Activated CD4-positive, alpha-beta memory T cell treated with anti-CD3 and anti-CD28 coated beads, Interleukin-2, amount 10 ng/mL, durations not matched to agents 7 days and 5 days (primary cell): ENCODE measurements at regions of chr15 and their contacts with region 1.

Region 1: DNA sequence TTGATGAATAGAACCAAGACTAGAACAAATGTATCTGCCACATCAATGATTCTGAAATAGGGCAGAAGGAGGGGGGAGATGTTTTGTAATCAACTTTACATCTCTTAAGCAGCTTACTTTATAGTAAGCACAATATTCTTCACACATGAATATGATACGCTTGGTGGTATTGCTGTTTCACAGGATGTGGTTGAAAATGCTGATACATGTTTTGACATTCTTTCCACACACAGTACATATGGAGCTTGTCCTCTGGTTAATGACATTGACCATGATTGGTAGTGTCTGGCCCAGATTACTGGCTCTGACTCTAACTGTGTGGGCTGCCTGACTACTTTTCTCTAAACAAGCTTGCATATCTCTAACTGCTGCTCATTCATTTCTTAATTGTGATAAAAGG is 168.9 kb downstream of the KLHL25 start:
- DNase-seq: peak; percentile 51
- H3K4me3 Mint-ChIP-seq: peak overlapping the region; percentile 51
- H3K27ac Mint-ChIP-seq: peak overlapping the region; percentile 90
- H3K4me1 Mint-ChIP-seq: peaks cover 74% of the 10 kb centered on the region
- H3K27me3 Mint-ChIP-seq: no peaks in the 10 kb centered on the region

Region 2: DNA sequence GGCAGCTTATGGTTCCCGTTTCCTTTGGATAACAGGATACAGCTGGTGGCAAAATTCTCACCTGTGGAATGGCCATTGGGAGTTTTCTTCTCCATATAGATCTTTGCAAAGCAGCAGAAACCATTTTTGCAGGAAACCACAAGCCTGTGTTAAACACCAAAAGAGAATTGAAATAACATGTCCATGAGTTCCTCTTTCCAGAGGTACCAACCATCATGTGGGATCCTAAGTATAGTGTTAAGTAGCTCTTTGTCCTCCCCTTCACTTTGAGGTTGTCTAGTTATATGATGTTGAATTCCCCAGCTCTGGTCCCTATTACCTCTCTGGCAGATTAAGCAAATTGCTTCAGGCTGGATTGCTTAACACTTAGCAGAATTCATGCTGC is 150.5 kb before region 1 on chr15:
- CTCF ChIA-PET with region 1: no interaction called
- POLR2A ChIA-PET with region 1: no interaction called
- DNase-seq: no peak
- H3K4me3 Mint-ChIP-seq: no peak overlapping the region
- H3K27ac Mint-ChIP-seq: no peak overlapping the region
- H3K4me1 Mint-ChIP-seq: peaks cover 42% of the 10 kb centered on the region
- H3K27me3 Mint-ChIP-seq: no peaks in the 10 kb centered on the region

Region 3: DNA sequence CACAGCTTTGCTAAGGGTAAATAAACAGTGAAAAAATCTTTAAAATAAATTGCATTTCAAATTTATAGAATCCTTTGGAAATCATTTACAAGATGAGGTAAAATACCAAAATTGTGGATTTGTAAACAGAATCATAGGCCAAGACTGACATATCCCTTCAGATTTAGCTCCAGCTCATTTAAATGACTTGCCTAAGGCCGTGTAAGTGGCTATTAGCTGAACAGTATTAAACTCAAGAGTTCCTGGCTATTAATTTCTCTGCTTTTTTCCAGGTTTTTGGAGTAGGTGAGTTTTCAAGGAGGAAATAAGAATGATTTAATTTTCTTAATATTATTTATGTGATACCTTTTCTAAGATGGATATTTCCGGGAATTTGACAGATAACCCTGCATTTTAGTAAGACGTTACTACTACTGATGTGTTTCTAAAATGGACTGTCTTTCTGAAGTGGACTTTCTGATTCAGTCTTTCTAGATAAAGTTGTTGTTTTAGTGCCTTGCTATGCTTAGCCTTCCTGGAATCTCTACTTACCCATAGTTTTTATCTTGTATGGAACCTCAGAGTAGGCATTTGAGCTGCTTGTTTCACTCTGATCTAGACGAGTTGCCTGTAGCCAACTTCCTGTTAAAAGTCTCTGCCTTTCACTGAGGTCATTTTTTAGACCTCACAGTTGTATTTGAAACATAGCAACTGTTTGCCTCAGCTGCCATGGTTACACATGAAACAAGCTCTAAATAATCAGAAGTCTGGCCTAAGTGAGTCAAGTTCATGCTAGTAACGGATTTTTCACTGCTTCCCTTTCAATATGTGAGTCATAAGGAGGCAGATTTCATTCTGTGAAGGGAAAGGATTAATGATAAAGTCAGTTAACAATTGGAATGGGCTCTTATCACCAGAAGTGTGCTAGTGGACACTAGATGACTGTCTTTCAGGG is 41.9 kb after region 1 on chr15:
- CTCF ChIA-PET with region 1: interaction called, 4 read pairs
- POLR2A ChIA-PET with region 1: interaction called, 19 read pairs
- DNase-seq: peak; percentile 61
- H3K4me3 Mint-ChIP-seq: peak overlapping the region; percentile 2
- H3K27ac Mint-ChIP-seq: peak overlapping the region; percentile 86
- H3K4me1 Mint-ChIP-seq: peaks cover 22% of the 10 kb centered on the region
- H3K27me3 Mint-ChIP-seq: no peaks in the 10 kb centered on the region